B cell (primary cell): ENCODE measurements at regions of chr13 and their contacts with region 1.

Region 1: DNA sequence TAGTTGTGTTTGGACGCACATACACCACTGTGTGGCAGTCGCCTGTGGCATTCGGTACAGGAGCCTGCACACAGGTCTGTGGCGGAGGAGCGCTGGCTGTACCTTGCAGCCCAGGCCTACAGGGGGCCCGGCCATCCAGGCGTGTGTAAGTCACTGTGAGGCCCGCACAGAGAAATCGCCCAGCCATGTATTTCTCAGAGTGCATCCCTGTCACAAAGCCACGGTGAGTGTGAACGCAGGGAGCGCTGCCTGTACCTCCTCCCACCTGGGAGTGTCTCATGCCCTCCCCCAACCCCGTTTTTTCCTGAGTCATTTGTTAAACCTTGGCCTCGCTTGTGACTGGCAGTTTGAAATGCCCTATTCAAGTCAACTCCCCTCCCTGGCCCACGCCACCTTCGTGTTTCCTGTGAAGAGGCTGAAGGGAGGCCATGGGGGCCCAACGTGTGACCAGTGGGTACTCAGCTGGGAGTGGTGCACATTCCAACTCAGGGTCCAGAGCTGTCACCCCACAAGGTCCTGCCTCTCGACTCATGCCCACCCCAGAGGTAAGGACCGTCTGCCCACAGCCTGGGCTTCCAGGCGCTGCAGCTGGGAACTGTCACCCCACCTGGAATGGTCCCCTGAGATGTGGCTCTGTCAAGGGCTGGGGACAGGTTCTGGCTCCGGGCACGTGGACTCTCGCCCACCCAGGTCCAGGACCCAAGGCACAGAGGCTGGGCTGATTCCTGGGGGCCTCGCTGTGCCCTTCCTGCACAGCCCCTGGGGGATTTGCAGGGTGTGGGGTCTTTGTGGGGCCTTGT is 11.6 kb upstream of the RASA3 start:
- DNase-seq: peak; percentile 76
- ATAC-seq: peak; percentile 42
- H3K4me3 ChIP-seq: peak overlapping the region in 1 of 5 experiments; percentile 0
- H3K4me3 Mint-ChIP-seq: no peak overlapping the region
- H3K27ac ChIP-seq: peak overlapping the region; percentile 48 to 84
- H3K27ac Mint-ChIP-seq: no peak overlapping the region
- H3K4me1 ChIP-seq: peaks cover 88 to 93% of the 10 kb centered on the region in 2 donors
- H3K4me1 Mint-ChIP-seq: peaks cover 12% of the 10 kb centered on the region
- H3K27me3 ChIP-seq: no peaks in the 10 kb centered on the region
- H3K27me3 Mint-ChIP-seq: no peaks in the 10 kb centered on the region
- CTCF ChIP-seq: peak; percentile 68

Region 2: DNA sequence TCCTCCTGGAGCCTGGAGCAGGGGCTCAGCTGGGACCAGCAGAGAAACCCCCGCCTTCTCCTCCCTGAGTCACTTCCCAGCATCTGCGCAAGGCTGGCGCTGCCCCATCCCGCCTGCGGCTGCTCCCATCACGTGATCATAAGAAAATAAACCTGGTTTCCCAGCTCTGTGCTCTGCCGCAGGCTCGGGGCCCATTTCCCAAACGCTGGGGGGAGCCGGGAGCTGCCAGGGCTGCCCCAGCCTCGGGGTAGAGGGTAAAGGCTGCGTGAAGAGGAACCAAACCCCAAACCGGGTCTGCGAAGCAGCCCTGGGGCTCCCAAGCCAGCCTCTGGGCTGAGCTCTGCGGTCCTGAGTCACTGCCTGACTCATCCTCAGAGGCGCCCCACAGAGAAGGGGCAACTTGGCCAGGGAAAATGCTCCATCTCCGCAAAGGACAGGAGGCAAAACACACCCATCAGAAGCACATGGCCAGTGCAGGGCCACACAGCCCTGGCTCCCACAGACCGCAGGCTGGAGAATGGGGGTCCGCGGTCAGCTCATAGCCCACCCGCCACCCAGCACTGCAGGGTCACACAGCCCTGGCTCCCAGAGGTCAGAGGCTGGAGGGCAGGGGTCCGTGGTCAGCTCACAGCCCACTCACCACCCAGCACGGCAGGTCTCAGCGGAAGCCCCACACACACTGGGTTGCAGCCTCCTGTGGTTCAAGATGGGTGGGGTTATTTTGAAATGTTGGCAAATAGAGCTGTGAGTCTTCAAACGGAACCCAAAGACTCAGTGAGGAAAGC is 78.7 kb before region 1 on chr13:
- CTCF ChIA-PET with region 1: interaction called, 3 read pairs
- POLR2A ChIA-PET with region 1: no interaction called
- intact Hi-C with region 1: loop called (anchors 2 kb)
- DNase-seq: peak; percentile 66
- ATAC-seq: peak; percentile 77
- H3K4me3 ChIP-seq: peak overlapping the region; percentile 19 to 68 (median 52)
- H3K4me3 Mint-ChIP-seq: peak overlapping the region; percentile 89
- H3K27ac ChIP-seq: peak overlapping the region; percentile 34 to 87
- H3K27ac Mint-ChIP-seq: peak overlapping the region; percentile 93
- H3K4me1 ChIP-seq: peaks cover 56 to 64% of the 10 kb centered on the region in 2 donors
- H3K4me1 Mint-ChIP-seq: peaks cover 63% of the 10 kb centered on the region
- H3K27me3 ChIP-seq: no peaks in the 10 kb centered on the region
- H3K27me3 Mint-ChIP-seq: no peaks in the 10 kb centered on the region
- CTCF ChIP-seq: no peak

Region 3: GRCh38 chr13:114132419-114133121 is 11.4 kb before region 1 on chr13 and contains the start of gene RASA3:
- CTCF ChIA-PET with region 1: interaction called, 5 read pairs
- POLR2A ChIA-PET with region 1: interaction called, 7 read pairs
- intact Hi-C with region 1: loop called (anchors 1 kb)
- DNase-seq: peak; percentile 74
- ATAC-seq: peak; percentile 69
- H3K4me3 ChIP-seq: peak within 1 kb of the TSS; percentile 82 to 95 (median 86)
- H3K4me3 Mint-ChIP-seq: peak within 1 kb of the TSS; percentile 100
- H3K27ac ChIP-seq: peak within 1 kb of the TSS; percentile 39 to 90
- H3K27ac Mint-ChIP-seq: peak within 1 kb of the TSS; percentile 87
- H3K4me1 ChIP-seq: peaks cover 44 to 49% of the 10 kb centered on the region in 2 donors
- H3K4me1 Mint-ChIP-seq: peaks cover 58% of the 10 kb centered on the region
- H3K27me3 ChIP-seq: no peaks in the 10 kb centered on the region
- H3K27me3 Mint-ChIP-seq: no peaks in the 10 kb centered on the region
- CTCF ChIP-seq: no peak
- total RNA-seq, gene RASA3: 87.4 and 88.8 TPM in 2 replicates

Region 4: DNA sequence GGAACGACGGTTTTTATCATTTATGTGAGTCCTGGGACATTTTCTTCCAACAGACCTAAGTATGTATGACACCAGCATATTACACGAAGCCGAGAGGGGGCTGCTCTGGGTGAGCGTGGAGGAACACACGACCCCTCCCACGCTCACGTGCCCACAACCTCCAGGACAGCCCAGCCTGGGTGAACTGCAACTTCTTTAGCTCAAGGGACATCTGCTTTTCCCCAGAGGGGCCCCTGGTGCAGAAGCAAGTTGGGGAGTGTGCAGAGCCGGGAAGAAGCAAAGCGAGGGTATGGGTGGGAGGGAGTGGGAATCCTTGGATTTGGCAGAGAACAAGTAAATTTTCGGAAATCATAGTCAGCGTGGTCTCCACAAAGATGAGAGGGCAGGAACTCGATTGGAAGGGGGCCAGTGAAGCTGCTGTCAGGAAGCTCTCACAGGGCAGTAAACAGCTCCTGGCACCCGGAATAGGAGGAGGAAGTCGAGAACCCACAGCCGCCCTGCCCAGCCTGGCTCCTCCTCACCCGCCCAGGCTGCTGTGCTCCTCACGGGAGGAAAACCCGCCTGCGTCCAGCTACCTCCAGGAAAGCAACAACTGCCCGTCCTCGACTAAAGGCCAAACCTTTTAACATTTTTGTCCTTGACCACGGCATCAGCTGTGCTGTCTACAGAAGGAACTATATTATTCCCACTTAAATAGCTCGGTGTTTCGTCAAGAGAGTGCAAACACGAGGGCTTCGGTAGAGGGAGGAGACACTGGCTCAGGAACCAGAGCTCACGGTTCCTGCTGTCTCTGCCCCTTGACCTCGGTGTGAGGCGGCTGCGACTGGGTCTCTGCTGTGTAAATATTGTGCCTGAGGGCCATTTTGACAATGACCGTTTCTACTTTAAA is 17.9 kb after region 1 on chr13:
- CTCF ChIA-PET with region 1: interaction called, 6 read pairs
- POLR2A ChIA-PET with region 1: interaction called, 4 read pairs
- intact Hi-C with region 1: loop called (anchors 2 kb)
- DNase-seq: peak; percentile 59
- ATAC-seq: peak; percentile 69
- H3K4me3 ChIP-seq: peak overlapping the region; percentile 18 to 52 (median 48)
- H3K4me3 Mint-ChIP-seq: peak overlapping the region; percentile 88
- H3K27ac ChIP-seq: peak overlapping the region in 1 of 2 donors; percentile 12
- H3K27ac Mint-ChIP-seq: peak overlapping the region; percentile 86
- H3K4me1 ChIP-seq: peaks cover 26 to 37% of the 10 kb centered on the region in 2 donors
- H3K4me1 Mint-ChIP-seq: peaks cover 54% of the 10 kb centered on the region
- H3K27me3 ChIP-seq: peaks cover 0 to 3% (median 0%) of the 10 kb centered on the region in 4 experiments
- H3K27me3 Mint-ChIP-seq: peaks cover 13% of the 10 kb centered on the region
- CTCF ChIP-seq: no peak

Region 5: DNA sequence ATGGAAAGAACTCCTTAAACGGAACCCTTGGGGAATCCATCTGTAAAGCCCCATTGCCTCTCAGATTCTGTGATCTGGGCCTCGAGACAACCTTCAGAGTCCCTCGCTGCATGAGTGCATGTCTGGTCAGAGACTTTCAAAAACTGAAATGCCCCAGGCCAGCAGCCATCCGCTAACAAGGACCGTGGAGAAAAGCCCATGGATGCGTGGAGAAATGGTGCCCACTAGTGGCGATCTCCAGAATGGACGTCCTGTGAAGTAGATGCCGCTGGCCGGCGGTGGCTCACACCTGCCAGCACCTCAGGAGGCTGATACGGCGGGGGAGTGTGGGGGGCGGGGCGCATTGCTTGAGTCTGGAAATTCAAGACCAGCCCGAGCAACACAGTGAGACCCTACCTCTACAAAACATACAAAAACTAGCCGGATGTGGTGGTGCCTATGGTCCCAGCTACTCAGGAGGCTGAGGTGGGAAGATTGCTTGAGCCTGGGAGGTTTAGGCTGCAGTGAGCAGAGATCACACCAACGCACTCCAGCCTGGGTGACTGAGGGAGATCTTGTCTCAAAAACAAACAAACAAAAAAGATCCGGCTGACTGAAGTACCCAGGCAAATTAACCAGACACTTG is 82.8 kb after region 1 on chr13:
- CTCF ChIA-PET with region 1: interaction called, 11 read pairs
- POLR2A ChIA-PET with region 1: no interaction called
- intact Hi-C with region 1: loop called (anchors 1 kb)
- DNase-seq: peak; percentile 87
- ATAC-seq: peak; percentile 93
- H3K4me3 ChIP-seq: no peak overlapping the region
- H3K4me3 Mint-ChIP-seq: no peak overlapping the region
- H3K27ac ChIP-seq: no peak overlapping the region
- H3K27ac Mint-ChIP-seq: peak overlapping the region; percentile 41
- H3K4me1 ChIP-seq: peaks cover 16 to 20% of the 10 kb centered on the region in 2 donors
- H3K4me1 Mint-ChIP-seq: peaks cover 20% of the 10 kb centered on the region
- H3K27me3 ChIP-seq: peaks cover 0 to 17% (median 12%) of the 10 kb centered on the region in 4 experiments
- H3K27me3 Mint-ChIP-seq: peaks cover 19% of the 10 kb centered on the region
- CTCF ChIP-seq: peak; percentile 89